Activated T-helper 1 cell treated with anti-CD3 and anti-CD28 coated beads, Interleukin-12 subunit alpha, Interleukin-12 subunit beta, Interleukin-2, Interleukin-4 antibody, amounts not matched to agents 30 ng/mL and 10 ng/mL and 1 ng/mL, durations not matched to agents 14 hours and 24 hours and 36 hours (primary cell): ENCODE measurements at regions of chr1 and their contacts with region 1.

Region 1: GRCh38 chr1:223726380-223727001 is 14.2 kb downstream of the CAPN2 start:
- DNase-seq: peak; percentile 86
- H3K4me3 Mint-ChIP-seq: peak overlapping the region; percentile 77
- H3K27ac Mint-ChIP-seq: peak overlapping the region; percentile 95
- H3K4me1 Mint-ChIP-seq: peaks cover 85% of the 10 kb centered on the region
- H3K27me3 Mint-ChIP-seq: no peaks in the 10 kb centered on the region

Region 2: DNA sequence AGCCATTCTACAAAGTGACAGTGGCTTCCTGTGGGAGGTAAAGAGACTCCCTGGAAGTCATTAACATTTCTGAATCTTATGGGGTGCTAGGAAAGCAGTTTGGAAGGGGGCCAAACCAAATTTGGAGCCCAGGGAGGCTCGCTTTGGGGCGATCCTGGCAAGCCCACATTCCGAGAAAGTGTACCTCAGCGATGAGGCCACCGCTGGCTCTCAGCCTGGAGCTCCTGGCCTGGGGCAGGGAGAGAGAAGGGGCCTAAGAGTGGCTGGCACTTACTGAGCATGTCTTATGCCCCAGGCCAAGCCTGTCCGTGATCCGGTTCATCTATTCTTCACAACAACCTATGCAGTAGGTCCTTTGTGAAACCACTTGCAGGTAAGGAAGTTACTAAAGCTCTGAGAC is 234.4 kb before region 1 on chr1:
- intact Hi-C with region 1: no loop called
- DNase-seq: no peak
- H3K4me3 Mint-ChIP-seq: no peak overlapping the region
- H3K27ac Mint-ChIP-seq: no peak overlapping the region
- H3K4me1 Mint-ChIP-seq: no peaks in the 10 kb centered on the region
- H3K27me3 Mint-ChIP-seq: no peaks in the 10 kb centered on the region

Region 3: GRCh38 chr1:223700942-223701637 is 25.4 kb before region 1 on chr1:
- intact Hi-C with region 1: loop called (anchors 1 kb)
- DNase-seq: no peak
- H3K4me3 Mint-ChIP-seq: no peak overlapping the region
- H3K27ac Mint-ChIP-seq: peak overlapping the region; percentile 83
- H3K4me1 Mint-ChIP-seq: peaks cover 54% of the 10 kb centered on the region
- H3K27me3 Mint-ChIP-seq: peaks cover 4% of the 10 kb centered on the region

Region 4: DNA sequence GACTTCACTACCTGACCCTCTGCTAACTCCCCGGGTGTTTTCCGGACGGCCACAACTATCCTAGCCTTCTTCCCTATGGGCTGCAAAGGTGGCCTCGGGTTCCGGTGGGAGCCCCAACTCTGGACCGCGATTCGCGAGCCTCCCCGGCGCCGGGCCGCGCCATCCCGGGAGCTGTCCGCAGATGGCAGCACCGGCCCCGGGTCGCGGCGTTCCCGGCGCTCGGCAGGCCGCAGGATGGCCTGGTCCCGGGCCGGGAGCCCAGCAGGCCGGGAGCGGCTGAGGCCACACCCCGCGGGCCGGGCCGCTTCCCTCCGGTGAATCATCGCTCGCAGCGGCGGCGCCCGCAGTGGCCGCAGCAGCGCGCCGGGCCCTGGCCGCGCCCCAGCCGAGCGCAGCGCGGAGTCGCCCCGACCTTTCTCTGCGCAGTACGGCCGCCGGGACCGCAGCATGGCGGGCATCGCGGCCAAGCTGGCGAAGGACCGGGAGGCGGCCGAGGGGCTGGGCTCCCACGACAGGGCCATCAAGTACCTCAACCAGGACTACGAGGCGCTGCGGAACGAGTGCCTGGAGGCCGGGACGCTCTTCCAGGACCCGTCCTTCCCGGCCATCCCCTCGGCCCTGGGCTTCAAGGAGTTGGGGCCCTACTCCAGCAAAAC is 14.2 kb before region 1 on chr1 and contains the start of gene CAPN2:
- intact Hi-C with region 1: loop called (anchors 1 kb)
- DNase-seq: peak; percentile 58
- H3K4me3 Mint-ChIP-seq: peak within 1 kb of the TSS; percentile 80
- H3K27ac Mint-ChIP-seq: peak within 1 kb of the TSS; percentile 88
- H3K4me1 Mint-ChIP-seq: peaks cover 62% of the 10 kb centered on the region
- H3K27me3 Mint-ChIP-seq: peaks cover 2% of the 10 kb centered on the region
- total RNA-seq, gene CAPN2: 66.3 and 70.4 TPM in 2 replicates

Region 5: DNA sequence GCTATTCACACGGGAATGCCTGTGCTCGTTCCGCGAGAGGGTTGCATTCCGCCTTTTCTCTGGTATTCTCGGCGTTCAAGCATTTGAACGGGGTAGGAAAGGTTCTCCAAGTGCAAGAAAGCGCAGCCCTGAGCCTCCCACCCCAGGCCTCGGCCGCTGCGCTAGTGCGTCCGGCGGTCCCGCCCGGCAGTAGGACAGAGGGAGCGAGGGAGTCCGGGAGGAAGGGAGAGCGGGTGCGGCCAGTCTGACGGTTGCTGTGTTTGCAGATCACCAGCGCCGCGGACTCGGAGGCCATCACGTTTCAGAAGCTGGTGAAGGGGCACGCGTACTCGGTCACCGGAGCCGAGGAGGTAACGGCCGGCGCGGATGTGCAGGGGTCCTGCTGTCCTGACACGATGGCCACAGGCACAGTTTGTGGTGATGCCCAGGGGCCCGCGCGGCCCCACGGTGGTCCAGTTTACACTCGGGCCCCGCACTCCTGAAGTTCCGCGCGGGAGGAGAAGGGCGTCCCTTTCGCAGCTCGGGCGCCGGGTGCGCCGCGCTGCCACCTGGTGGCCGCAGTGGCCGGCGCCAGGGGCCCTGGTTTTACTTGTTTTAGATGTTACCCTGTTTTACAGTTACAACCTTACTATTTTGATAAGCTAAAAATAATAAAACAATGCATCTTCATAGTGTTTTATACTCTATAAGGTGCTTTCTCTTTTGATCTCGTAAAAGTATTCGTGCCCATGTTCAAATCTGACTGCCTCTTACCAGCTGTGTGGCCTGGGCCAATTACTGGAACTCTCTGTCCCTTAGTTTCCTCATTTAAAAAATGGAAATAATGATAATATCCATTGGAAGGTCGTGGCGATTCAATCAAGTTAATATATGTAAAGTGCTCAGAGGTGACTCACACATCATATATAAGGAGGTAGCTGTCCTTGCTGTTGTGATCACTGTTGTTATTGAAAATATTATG is 22.6 kb after region 1 on chr1:
- intact Hi-C with region 1: loop called (anchors 1 kb)
- DNase-seq: peak; percentile 39
- H3K4me3 Mint-ChIP-seq: peak overlapping the region; percentile 72
- H3K27ac Mint-ChIP-seq: peak overlapping the region; percentile 55
- H3K4me1 Mint-ChIP-seq: peaks cover 20% of the 10 kb centered on the region
- H3K27me3 Mint-ChIP-seq: no peaks in the 10 kb centered on the region

Region 6: GRCh38 chr1:223775054-223775453 is 48.6 kb after region 1 on chr1:
- intact Hi-C with region 1: loop called (anchors 2 kb)
- DNase-seq: no peak
- H3K4me3 Mint-ChIP-seq: no peak overlapping the region
- H3K27ac Mint-ChIP-seq: no peak overlapping the region
- H3K4me1 Mint-ChIP-seq: peaks cover 17% of the 10 kb centered on the region
- H3K27me3 Mint-ChIP-seq: no peaks in the 10 kb centered on the region

Region 7: GRCh38 chr1:224192082-224192788 is 465.7 kb after region 1 on chr1:
- intact Hi-C with region 1: loop called (anchors 5 kb)
- DNase-seq: no peak
- H3K4me3 Mint-ChIP-seq: peak overlapping the region; percentile 24
- H3K27ac Mint-ChIP-seq: peak overlapping the region; percentile 79
- H3K4me1 Mint-ChIP-seq: peaks cover 22% of the 10 kb centered on the region
- H3K27me3 Mint-ChIP-seq: no peaks in the 10 kb centered on the region